Endothelial cell of umbilical vein (primary cell): ENCODE measurements at regions of chr1 and their contacts with region 1.

Region 1: GRCh38 chr1:214328770-214329469 is 48.0 kb downstream of the SMYD2 start:
- DNase-seq: peak; percentile 77
- H3K4me3 ChIP-seq: no peak overlapping the region
- H3K27ac ChIP-seq: no peak overlapping the region
- H3K4me1 ChIP-seq: peaks cover 9% of the 10 kb centered on the region
- H3K27me3 ChIP-seq: no peaks in the 10 kb centered on the region
- CTCF ChIP-seq: peak; percentile 84 to 92
- POLR2A ChIP-seq: no peak

Region 2: GRCh38 chr1:213987927-213988506 is 340.9 kb before region 1 on chr1 and contains the start of gene PROX1:
- CTCF ChIA-PET with region 1: interaction called, 6 read pairs
- POLR2A ChIA-PET with region 1: no interaction called
- dilution Hi-C with region 1: no loop called
- intact Hi-C with region 1: loop called (anchors 5 kb)
- DNase-seq: no peak
- H3K4me3 ChIP-seq: peak within 1 kb of the TSS; percentile 45 to 91 (median 79)
- H3K27ac ChIP-seq: peak within 1 kb of the TSS; percentile 65
- H3K4me1 ChIP-seq: peaks cover 16% of the 10 kb centered on the region
- H3K27me3 ChIP-seq: peaks cover 33 to 42% of the 10 kb centered on the region in 2 experiments
- CTCF ChIP-seq: peak in 1 of 2 donors; percentile 0
- POLR2A ChIP-seq: peak; percentile 85
- total RNA-seq, gene PROX1: 3.3 and 4.0 TPM in 2 replicates

Region 3: GRCh38 chr1:214261206-214262123 is 67.5 kb before region 1 on chr1:
- CTCF ChIA-PET with region 1: interaction called, 284 read pairs
- POLR2A ChIA-PET with region 1: no interaction called
- dilution Hi-C with region 1: no loop called
- intact Hi-C with region 1: loop called (anchors 1 kb)
- DNase-seq: peak; percentile 86
- H3K4me3 ChIP-seq: no peak overlapping the region
- H3K27ac ChIP-seq: no peak overlapping the region
- H3K4me1 ChIP-seq: peaks cover 24% of the 10 kb centered on the region
- H3K27me3 ChIP-seq: peaks cover 0 to 4% of the 10 kb centered on the region in 2 experiments
- CTCF ChIP-seq: peak; percentile 96 to 97
- POLR2A ChIP-seq: no peak

Region 4: GRCh38 chr1:214349781-214350180 is 20.9 kb after region 1 on chr1:
- CTCF ChIA-PET with region 1: interaction called, 14 read pairs
- POLR2A ChIA-PET with region 1: no interaction called
- dilution Hi-C with region 1: no loop called
- intact Hi-C with region 1: no loop called
- DNase-seq: no peak
- H3K4me3 ChIP-seq: no peak overlapping the region
- H3K27ac ChIP-seq: no peak overlapping the region
- H3K4me1 ChIP-seq: no peaks in the 10 kb centered on the region
- H3K27me3 ChIP-seq: no peaks in the 10 kb centered on the region
- CTCF ChIP-seq: no peak
- POLR2A ChIP-seq: no peak

Region 5: GRCh38 chr1:214584805-214585766 is 256.2 kb after region 1 on chr1:
- CTCF ChIA-PET with region 1: interaction called, 359 read pairs
- POLR2A ChIA-PET with region 1: no interaction called
- dilution Hi-C with region 1: loop called (anchors 25 kb)
- intact Hi-C with region 1: loop called (anchors 1 kb)
- DNase-seq: peak; percentile 77
- H3K4me3 ChIP-seq: no peak overlapping the region
- H3K27ac ChIP-seq: no peak overlapping the region
- H3K4me1 ChIP-seq: peaks cover 14% of the 10 kb centered on the region
- H3K27me3 ChIP-seq: no peaks in the 10 kb centered on the region
- CTCF ChIP-seq: peak; percentile 50 to 62
- POLR2A ChIP-seq: no peak

Region 6: DNA sequence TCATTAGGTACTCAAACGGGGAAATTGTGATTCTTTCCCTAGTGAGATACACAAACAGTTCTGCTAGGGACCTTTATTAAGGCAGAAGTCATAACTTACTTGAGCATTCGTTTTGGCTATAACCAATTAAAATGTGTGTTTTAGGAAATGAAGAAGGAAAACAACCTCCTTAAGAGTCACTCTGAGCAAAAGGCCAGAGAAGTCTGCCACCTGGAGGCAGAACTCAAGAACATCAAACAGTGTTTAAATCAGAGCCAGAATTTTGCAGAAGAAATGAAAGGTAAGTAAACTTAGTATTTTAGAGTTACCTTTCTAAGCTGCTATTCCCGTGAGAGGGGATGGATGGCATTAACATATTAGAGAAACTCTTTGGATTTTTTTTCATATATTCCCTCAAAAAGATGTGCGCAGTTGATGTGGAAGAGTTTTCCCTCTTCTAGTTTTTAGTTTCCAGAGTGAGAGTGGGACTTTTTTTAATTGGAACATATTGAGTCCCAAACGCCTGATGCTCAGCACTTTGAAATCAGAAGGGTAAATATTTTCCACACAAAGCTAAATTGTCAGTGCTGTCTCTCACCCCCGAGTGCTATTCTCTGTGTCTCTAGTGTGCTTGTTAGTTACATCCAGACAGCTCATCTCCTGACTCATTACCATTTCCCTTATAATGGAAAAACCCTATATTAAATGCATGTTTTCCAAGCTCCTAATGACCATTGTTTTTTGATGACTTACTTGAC is 309.0 kb after region 1 on chr1:
- CTCF ChIA-PET with region 1: interaction called, 45 read pairs
- POLR2A ChIA-PET with region 1: no interaction called
- dilution Hi-C with region 1: no loop called
- intact Hi-C with region 1: no loop called
- DNase-seq: peak; percentile 64
- H3K4me3 ChIP-seq: no peak overlapping the region
- H3K27ac ChIP-seq: no peak overlapping the region
- H3K4me1 ChIP-seq: peaks cover 7% of the 10 kb centered on the region
- H3K27me3 ChIP-seq: no peaks in the 10 kb centered on the region
- CTCF ChIP-seq: peak; percentile 52 to 68
- POLR2A ChIP-seq: no peak